H1 (cell line): ENCODE measurements at regions of chr1 and their contacts with region 1.

Region 1: GRCh38 chr1:46622344-46622743 is 5.7 kb upstream of the MOB3C start:
- DNase-seq: peak in 1 of 2 experiments; percentile 70
- H3K4me3 ChIP-seq: no peak overlapping the region
- H3K27ac ChIP-seq: no peak overlapping the region
- H3K4me1 ChIP-seq: no peaks in the 10 kb centered on the region; a peak in 3 of 7 replicates
- H3K27me3 ChIP-seq: peaks cover 0 to 6% (median 5%) of the 10 kb centered on the region in 4 experiments; a peak in 5 of 7 replicates
- CTCF ChIP-seq: peak; percentile 38 to 76 (median 72)
- EP300 ChIP-seq: no peak
- POLR2A ChIP-seq: no peak
- RAD21 ChIP-seq: peak; percentile 66 to 78

Region 2: DNA sequence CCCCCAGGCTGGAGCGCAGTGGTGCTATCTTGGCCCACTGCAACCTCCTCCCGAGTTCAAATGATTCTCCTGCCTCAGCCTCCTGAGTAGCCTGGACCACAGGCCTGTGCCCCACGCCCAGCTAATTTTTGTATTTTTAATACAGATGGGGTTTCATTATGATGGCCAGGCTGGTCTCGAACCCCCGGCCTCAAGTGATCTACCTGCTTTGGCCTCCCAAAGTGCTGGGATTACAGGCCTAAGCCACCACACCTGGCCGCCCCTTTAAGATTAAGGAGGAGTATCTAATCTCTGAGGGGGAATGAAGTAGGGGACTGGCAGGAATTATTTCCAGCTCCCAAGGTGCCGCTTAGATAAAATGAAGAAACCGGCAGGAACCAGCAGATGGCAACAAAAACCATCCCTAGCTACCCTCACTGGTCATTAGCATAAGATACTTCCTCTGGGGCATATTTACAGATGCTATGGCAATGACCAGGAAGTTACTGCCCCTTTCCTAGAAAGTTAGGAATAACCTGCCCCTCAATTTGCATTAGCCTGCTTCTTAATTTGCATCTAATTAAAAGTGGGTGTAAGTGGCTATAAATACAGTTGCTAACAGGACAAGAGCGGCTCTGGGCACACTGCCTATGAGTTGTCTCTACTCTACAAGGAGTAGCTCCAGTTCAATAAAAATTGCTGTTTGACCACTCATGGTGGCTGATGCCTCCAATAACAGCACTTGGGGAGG is 288.9 kb before region 1 on chr1:
- CTCF ChIA-PET with region 1: no interaction called
- POLR2A ChIA-PET with region 1: no interaction called
- DNase-seq: peak in 1 of 2 experiments; percentile 34
- H3K4me3 ChIP-seq: no peak overlapping the region
- H3K27ac ChIP-seq: no peak overlapping the region
- H3K4me1 ChIP-seq: peaks cover 0 to 3% (median 0%) of the 10 kb centered on the region in 4 experiments; a peak in 1 of 7 replicates
- H3K27me3 ChIP-seq: no peaks in the 10 kb centered on the region
- CTCF ChIP-seq: peak in 2 of 3 experiments; percentile 50 to 55; a peak in 3 of 4 replicates
- EP300 ChIP-seq: no peak
- POLR2A ChIP-seq: no peak
- RAD21 ChIP-seq: peak; percentile 56 to 65

Region 3: DNA sequence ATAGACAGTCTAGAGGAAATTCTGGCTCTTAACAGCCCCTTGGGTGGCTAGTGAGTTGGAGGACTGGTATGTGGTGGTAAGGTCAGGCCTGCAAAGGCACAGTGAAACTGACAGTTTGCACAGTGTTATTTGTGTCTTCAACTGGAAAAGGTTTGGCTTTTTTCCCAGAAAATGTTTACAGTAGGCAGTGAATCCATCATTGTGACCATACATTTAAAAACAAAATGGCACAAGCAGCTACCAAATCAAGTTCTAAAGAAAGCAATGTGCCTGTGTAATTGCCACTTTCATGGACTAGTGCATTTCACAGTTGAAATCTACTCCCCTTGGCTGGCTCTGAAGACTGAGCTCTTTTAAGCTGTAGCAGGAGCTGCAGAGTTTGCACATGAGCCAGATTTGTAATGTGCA is 21.0 kb after region 1 on chr1:
- CTCF ChIA-PET with region 1: interaction called, 78 read pairs
- POLR2A ChIA-PET with region 1: interaction called, 3 read pairs
- DNase-seq: no peak
- H3K4me3 ChIP-seq: no peak overlapping the region
- H3K27ac ChIP-seq: no peak overlapping the region
- H3K4me1 ChIP-seq: no peaks in the 10 kb centered on the region
- H3K27me3 ChIP-seq: no peaks in the 10 kb centered on the region
- CTCF ChIP-seq: no peak
- EP300 ChIP-seq: no peak
- POLR2A ChIP-seq: no peak
- RAD21 ChIP-seq: no peak

Region 4: GRCh38 chr1:46667782-46668760 is 45.7 kb after region 1 on chr1 and contains the start of gene ATPAF1:
- CTCF ChIA-PET with region 1: interaction called, 12 read pairs
- POLR2A ChIA-PET with region 1: interaction called, 13 read pairs
- DNase-seq: peak; percentile 81 to 86
- H3K4me3 ChIP-seq: peak within 1 kb of the TSS; percentile 55 to 74 (median 57)
- H3K27ac ChIP-seq: peak within 1 kb of the TSS; percentile 81
- H3K4me1 ChIP-seq: peaks cover 5 to 16% (median 7%) of the 10 kb centered on the region in 4 experiments; a peak in 6 of 7 replicates
- H3K27me3 ChIP-seq: no peaks in the 10 kb centered on the region
- CTCF ChIP-seq: no peak; a peak in 1 of 4 replicates
- EP300 ChIP-seq: peak in 1 of 2 experiments; percentile 48; a peak in 1 of 3 replicates
- POLR2A ChIP-seq: peak; percentile 63 to 92
- RAD21 ChIP-seq: peak in 1 of 2 experiments; percentile 23; a peak in 1 of 4 replicates
- total RNA-seq, gene ATPAF1: 44.6 and 46.7 TPM in 2 replicates